MCF 10A (cell line): ENCODE measurements at regions of chr15 and their contacts with region 1.

Region 1: GRCh38 chr15:75836953-75837321 is 6.3 kb upstream of the UBE2Q2 start:
- DNase-seq: peak; percentile 85
- H3K4me3 Mint-ChIP-seq: no peak overlapping the region
- H3K27ac Mint-ChIP-seq: no peak overlapping the region
- H3K4me1 Mint-ChIP-seq: peaks cover 7% of the 10 kb centered on the region
- H3K27me3 Mint-ChIP-seq: no peaks in the 10 kb centered on the region
- CTCF ChIP-seq: no peak

Region 2: GRCh38 chr15:75823860-75824613 is 12.9 kb before region 1 on chr15:
- CTCF ChIA-PET with region 1: interaction called, 4 read pairs
- POLR2A ChIA-PET with region 1: interaction called, 11 read pairs
- intact Hi-C with region 1: no loop called
- DNase-seq: peak; percentile 15
- H3K4me3 Mint-ChIP-seq: no peak overlapping the region
- H3K27ac Mint-ChIP-seq: no peak overlapping the region
- H3K4me1 Mint-ChIP-seq: peaks cover 14% of the 10 kb centered on the region
- H3K27me3 Mint-ChIP-seq: no peaks in the 10 kb centered on the region
- CTCF ChIP-seq: no peak